Motor neuron (in vitro differentiated cells): ENCODE measurements at regions of chr1 and their contacts with region 1.

Region 1: DNA sequence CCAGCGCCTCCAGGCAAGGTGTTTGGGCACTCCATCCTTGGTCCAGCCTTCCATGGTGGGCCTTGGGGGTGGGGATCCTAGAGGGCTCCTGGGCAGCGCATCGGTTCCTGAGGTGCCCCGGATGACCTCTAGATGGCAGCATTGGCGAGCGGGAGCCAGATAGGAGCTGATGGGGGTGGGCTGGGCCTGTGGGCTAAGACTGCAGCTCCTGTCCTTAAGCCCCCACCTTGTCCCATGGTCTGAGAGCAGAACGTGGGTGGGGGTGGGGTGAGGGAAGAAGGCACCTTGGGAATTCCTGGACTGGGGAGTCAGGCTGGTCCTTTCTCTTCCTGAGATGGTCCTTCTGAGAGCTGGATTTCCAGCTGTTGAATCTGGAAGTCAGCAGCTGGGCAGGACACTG is 93.4 kb upstream of the CSF3R start:
- ATAC-seq: peak; percentile 80 to 99 (median 86)
- H3K4me3 ChIP-seq: no peak overlapping the region
- H3K27ac ChIP-seq: peak overlapping the region; percentile 1 to 2
- H3K4me1 ChIP-seq: peaks cover 28 to 33% of the 10 kb centered on the region in 2 donors

Region 2: GRCh38 chr1:37410815-37411214 is 834.7 kb after region 1 on chr1:
- in situ Hi-C with region 1: loop called in 1 of 9 experiments (anchors 25 kb)
- ATAC-seq: peak in 7 of 8 experiments; percentile 11 to 64 (median 24)
- H3K4me3 ChIP-seq: no peak overlapping the region
- H3K27ac ChIP-seq: peak overlapping the region in 1 of 2 donors; percentile 37
- H3K4me1 ChIP-seq: peaks cover 21 to 33% of the 10 kb centered on the region in 2 donors

Region 3: DNA sequence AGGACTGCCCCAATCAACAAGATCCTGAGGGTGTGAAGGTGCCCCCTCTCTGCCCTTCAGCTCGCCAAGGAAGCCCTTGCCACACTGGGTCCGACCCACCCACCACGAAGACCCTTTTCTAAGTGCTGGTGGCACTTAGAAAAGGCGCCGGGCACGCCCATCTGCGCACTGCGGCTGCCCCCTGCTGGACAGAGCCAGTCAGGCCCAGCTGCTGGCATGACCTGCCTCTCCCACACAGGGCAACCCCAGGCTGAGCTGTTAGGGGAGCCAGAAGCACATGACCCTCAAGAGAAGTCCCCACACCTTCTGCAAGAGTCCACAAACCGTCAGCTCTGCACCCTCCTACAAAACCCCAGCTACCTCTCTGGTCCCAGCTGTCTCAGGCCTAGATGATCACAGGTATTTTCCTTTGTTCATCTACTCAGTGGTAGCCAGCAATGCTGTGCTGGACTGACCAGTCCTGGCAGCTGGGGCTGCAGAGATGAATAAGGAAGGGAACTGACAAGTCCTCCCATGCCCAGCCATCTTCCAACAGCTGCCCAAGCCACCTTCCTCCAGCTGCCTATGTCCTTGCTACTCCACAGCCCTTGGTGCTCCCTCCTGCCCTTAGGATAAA is 858.3 kb after region 1 on chr1:
- in situ Hi-C with region 1: loop called in 5 of 9 experiments (anchors 25 kb)
- ATAC-seq: peak; percentile 71 to 95 (median 78)
- H3K4me3 ChIP-seq: no peak overlapping the region
- H3K27ac ChIP-seq: no peak overlapping the region
- H3K4me1 ChIP-seq: peaks cover 34 to 39% of the 10 kb centered on the region in 2 donors